ENCODE measurements at regions of chr3 and their contacts with region 1.

Region 1: GRCh38 chr3:128969993-128970739 is 23.7 kb downstream of the CFAP92 start:
- DNase-seq: peak in 1 of 2 experiments; percentile 40
- H3K4me3 ChIP-seq: no peak overlapping the region
- H3K27ac ChIP-seq: no peak overlapping the region
- H3K4me1 ChIP-seq: no peaks in the 10 kb centered on the region; the same call in 1 of the 2 replicates
- H3K27me3 ChIP-seq: peaks cover 9% of the 10 kb centered on the region; the same call in 1 of the 2 replicates
- CTCF ChIP-seq: peak; percentile 96

Region 2: DNA sequence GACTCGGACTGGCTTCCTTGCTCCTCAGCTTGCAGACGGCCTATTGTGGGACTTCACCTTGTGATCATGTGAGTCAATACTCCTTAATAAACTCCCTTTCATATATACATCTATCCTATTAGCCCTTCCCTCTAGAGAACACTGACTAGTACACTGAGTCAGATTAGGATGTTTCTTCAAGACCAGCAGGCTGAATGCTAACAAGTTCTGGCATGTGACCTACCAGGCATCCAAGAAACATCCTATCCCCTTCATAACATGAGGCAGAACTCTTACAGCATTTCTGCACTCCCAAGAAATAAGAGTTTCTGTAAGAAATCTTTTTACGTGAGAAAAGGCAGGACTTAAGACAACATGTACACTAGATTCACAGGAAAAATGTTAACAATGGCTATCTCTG is 14.4 kb after region 1 on chr3:
- CTCF ChIA-PET with region 1: interaction called, 12 read pairs
- POLR2A ChIA-PET with region 1: no interaction called
- intact Hi-C with region 1: no loop called
- DNase-seq: no peak
- H3K4me3 ChIP-seq: no peak overlapping the region
- H3K27ac ChIP-seq: no peak overlapping the region
- H3K4me1 ChIP-seq: no peaks in the 10 kb centered on the region
- H3K27me3 ChIP-seq: peaks cover 8% of the 10 kb centered on the region
- CTCF ChIP-seq: no peak

Region 3: GRCh38 chr3:129026728-129027543 is 56.8 kb after region 1 on chr3:
- CTCF ChIA-PET with region 1: interaction called, 26 read pairs
- POLR2A ChIA-PET with region 1: no interaction called
- intact Hi-C with region 1: no loop called
- DNase-seq: peak; percentile 84 to 94
- H3K4me3 ChIP-seq: peak overlapping the region; percentile 50; the same call in 1 of the 2 replicates
- H3K27ac ChIP-seq: no peak overlapping the region
- H3K4me1 ChIP-seq: 0 out of 2 replicates have a peak, but pooled peaks cover 4% of the 10 kb centered on the region
- H3K27me3 ChIP-seq: no peaks in the 10 kb centered on the region
- CTCF ChIP-seq: peak; percentile 66

Region 4: GRCh38 chr3:129120254-129121004 is 150.3 kb after region 1 on chr3:
- CTCF ChIA-PET with region 1: interaction called, 13 read pairs
- POLR2A ChIA-PET with region 1: no interaction called
- intact Hi-C with region 1: no loop called
- DNase-seq: peak; percentile 91 to 92
- H3K4me3 ChIP-seq: peak overlapping the region; percentile 70
- H3K27ac ChIP-seq: peak overlapping the region; percentile 90
- H3K4me1 ChIP-seq: peaks cover 17% of the 10 kb centered on the region
- H3K27me3 ChIP-seq: no peaks in the 10 kb centered on the region
- CTCF ChIP-seq: no peak

Region 5: GRCh38 chr3:129288446-129288845 is 318.3 kb after region 1 on chr3:
- CTCF ChIA-PET with region 1: no interaction called
- POLR2A ChIA-PET with region 1: interaction called, 27 read pairs
- intact Hi-C with region 1: no loop called
- DNase-seq: no peak
- H3K4me3 ChIP-seq: no peak overlapping the region
- H3K27ac ChIP-seq: no peak overlapping the region
- H3K4me1 ChIP-seq: no peaks in the 10 kb centered on the region
- H3K27me3 ChIP-seq: no peaks in the 10 kb centered on the region
- CTCF ChIP-seq: no peak

Region 6: DNA sequence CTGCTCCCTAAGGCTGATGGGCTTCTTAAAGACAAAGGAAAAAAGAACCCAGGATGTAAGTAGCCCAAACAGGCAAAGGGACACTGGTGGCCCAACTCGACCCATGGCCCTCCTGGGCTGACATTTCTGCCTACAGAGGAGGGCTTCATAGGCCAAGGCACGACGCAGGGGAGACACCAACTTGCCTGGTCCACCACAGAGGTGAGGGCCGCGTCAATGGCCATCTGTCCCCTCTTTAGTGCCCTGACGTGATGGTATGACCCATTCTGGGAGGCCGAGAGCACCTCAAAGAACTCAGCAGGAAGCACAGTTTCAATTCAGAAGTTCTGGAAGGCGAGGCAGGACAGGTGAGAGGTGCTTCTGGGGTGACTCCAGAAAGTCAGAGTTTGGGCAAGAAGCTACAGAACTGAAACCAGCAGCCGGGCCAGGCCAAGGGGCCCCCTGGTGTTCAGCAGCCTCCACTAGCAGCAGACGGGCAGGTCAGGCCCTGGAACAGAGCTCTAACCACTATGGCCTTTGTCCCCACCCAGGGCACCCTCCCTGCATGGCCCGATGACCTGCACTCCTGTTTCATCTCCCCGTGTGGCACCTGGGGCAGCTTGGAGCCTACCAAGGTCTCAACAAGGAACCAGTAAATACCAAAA is 353.6 kb after region 1 on chr3:
- CTCF ChIA-PET with region 1: interaction called, 10 read pairs
- POLR2A ChIA-PET with region 1: no interaction called
- intact Hi-C with region 1: no loop called
- DNase-seq: no peak
- H3K4me3 ChIP-seq: no peak overlapping the region
- H3K27ac ChIP-seq: no peak overlapping the region
- H3K4me1 ChIP-seq: no peaks in the 10 kb centered on the region
- H3K27me3 ChIP-seq: no peaks in the 10 kb centered on the region
- CTCF ChIP-seq: no peak; the same call in 1 of the 2 replicates

Measured in PC-9 (cell line).